CD8-positive, alpha-beta T cell (primary cell): ENCODE measurements at regions of chr5 and their contacts with region 1.

Region 1: GRCh38 chr5:132883261-132883834 is 9.9 kb downstream of the LEAP2 start:
- DNase-seq: peak in 5 of 9 experiments; percentile 16 to 69 (median 24)
- ATAC-seq: peak; percentile 69
- H3K4me3 ChIP-seq: no peak overlapping the region
- H3K4me3 Mint-ChIP-seq: no peak overlapping the region
- H3K27ac ChIP-seq: no peak overlapping the region
- H3K27ac Mint-ChIP-seq: peak overlapping the region; percentile 11
- H3K4me1 ChIP-seq: no peaks in the 10 kb centered on the region
- H3K4me1 Mint-ChIP-seq: peaks cover 3% of the 10 kb centered on the region
- H3K27me3 ChIP-seq: no peaks in the 10 kb centered on the region
- H3K27me3 Mint-ChIP-seq: no peaks in the 10 kb centered on the region
- CTCF ChIP-seq: peak; percentile 46

Region 2: DNA sequence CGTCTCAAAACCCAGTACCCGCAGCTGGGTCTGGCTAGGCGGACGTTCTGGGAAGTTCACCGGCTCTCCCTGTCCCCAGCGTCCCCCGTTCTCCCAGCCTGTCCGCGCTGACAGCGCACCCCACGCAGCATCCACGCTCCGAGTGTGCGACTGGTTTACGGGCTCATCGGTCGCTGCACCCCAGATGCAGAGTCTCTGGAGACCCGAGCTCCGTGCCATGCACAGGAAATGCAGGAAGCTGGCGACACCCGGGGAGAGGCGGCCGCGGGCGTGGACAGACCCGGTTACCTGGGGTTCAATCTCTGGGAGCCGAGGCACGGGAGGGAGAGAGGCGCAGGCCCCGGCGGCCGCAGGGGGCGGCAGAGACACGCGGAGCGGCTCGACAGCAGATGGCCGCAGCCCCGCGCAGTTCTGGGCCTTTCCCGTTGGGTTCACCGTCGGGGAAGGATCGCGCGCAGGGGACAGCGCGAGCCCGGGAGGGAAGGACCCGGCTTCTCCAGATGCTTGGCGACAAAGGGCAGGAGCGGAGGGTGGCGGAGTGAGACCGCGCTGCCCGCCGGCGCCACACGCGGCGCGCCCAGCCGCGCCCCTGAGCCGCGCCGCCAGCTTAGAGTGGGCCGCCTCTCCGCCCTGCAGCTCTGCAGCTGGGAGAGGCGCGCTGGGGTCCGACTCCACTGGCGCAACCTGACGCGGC is 53.5 kb before region 1 on chr5:
- CTCF ChIA-PET with region 1: interaction called, 31 read pairs
- POLR2A ChIA-PET with region 1: no interaction called
- intact Hi-C with region 1: loop called in 1 of 2 experiments (anchors 1 kb)
- DNase-seq: peak; percentile 43 to 84 (median 71)
- ATAC-seq: peak; percentile 89
- H3K4me3 ChIP-seq: peak overlapping the region; percentile 48 to 69
- H3K4me3 Mint-ChIP-seq: peak overlapping the region; percentile 85
- H3K27ac ChIP-seq: no peak overlapping the region
- H3K27ac Mint-ChIP-seq: no peak overlapping the region
- H3K4me1 ChIP-seq: peaks cover 16% of the 10 kb centered on the region
- H3K4me1 Mint-ChIP-seq: peaks cover 3% of the 10 kb centered on the region
- H3K27me3 ChIP-seq: peaks cover 20 to 21% of the 10 kb centered on the region in 2 experiments
- H3K27me3 Mint-ChIP-seq: peaks cover 47% of the 10 kb centered on the region
- CTCF ChIP-seq: peak; percentile 84

Region 3: GRCh38 chr5:132915681-132916080 is 32.3 kb after region 1 on chr5:
- CTCF ChIA-PET with region 1: no interaction called
- POLR2A ChIA-PET with region 1: no interaction called
- intact Hi-C with region 1: no loop called
- DNase-seq: no peak
- ATAC-seq: no peak
- H3K4me3 ChIP-seq: no peak overlapping the region
- H3K4me3 Mint-ChIP-seq: no peak overlapping the region
- H3K27ac ChIP-seq: no peak overlapping the region
- H3K27ac Mint-ChIP-seq: no peak overlapping the region
- H3K4me1 ChIP-seq: no peaks in the 10 kb centered on the region
- H3K4me1 Mint-ChIP-seq: peaks cover 20% of the 10 kb centered on the region
- H3K27me3 ChIP-seq: no peaks in the 10 kb centered on the region
- H3K27me3 Mint-ChIP-seq: no peaks in the 10 kb centered on the region
- CTCF ChIP-seq: no peak